ENCODE measurements at regions of chr14 and their contacts with region 1.

Region 1: DNA sequence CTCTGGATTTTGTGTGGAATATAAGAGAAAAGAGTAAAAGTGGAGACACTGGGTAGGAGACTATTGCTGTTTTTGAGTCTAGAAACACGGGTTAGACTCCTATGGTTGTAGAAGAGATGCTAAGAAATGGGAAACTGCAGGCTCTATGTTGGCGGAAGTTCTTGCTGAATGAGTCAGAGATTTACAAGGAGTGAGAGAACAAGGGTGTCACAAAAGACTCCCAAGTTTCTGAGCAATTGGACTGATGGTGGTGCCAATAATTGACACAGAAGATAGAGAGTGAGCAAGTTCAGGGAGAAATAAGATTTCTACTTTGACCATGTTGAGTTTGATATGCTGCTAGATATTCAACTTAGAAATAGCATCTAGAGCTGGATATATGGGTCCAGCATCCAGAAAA is 2.6 kb upstream of the PRKD1 start:
- DNase-seq: no peak
- H3K4me3 Mint-ChIP-seq: no peak overlapping the region
- H3K27ac Mint-ChIP-seq: peak overlapping the region; percentile 32
- H3K4me1 Mint-ChIP-seq: peaks cover 24% of the 10 kb centered on the region
- H3K27me3 Mint-ChIP-seq: no peaks in the 10 kb centered on the region
- CTCF ChIP-seq: no peak

Region 2: DNA sequence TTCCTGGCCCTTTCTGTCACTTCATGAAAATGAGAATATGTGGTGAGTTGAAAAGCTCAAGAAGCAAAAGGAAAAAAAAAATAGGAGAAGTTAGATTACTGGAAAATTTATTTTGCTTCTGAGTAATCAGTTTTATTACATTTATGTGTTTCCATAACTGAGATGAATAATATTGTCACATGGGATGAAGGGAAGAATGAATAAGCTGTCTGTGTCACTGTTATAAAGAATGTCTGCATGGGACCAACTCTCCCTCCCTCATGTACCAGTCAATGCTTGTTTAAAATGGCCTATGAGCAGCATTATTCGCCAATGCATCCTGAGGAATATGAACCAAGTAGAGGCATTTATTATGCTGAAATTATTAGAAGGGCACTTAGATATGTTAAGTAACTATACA is 249.0 kb before region 1 on chr14:
- CTCF ChIA-PET with region 1: no interaction called
- intact Hi-C with region 1: no loop called
- DNase-seq: no peak
- H3K4me3 Mint-ChIP-seq: no peak overlapping the region
- H3K27ac Mint-ChIP-seq: no peak overlapping the region
- H3K4me1 Mint-ChIP-seq: no peaks in the 10 kb centered on the region
- H3K27me3 Mint-ChIP-seq: no peaks in the 10 kb centered on the region
- CTCF ChIP-seq: no peak

Region 3: DNA sequence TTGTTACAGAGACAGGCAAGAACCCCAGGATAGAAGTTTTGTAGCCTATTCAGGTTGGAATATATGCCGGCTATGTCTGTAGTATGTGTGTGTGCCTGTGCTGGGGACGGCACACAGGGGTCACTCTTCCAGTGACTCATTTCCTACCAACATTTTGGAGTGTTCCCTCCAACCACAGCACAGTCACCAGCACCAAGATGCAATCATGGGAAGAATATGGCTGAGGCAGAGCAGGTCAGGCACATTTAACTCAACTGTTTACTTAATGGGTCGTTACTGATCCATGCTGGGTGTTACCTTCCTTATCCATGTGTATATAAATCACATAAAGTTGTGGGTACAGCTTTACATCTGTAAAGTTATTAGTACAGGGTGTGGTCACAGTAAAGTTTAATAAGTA is 181.0 kb before region 1 on chr14:
- CTCF ChIA-PET with region 1: no interaction called
- intact Hi-C with region 1: loop called (anchors 5 kb)
- DNase-seq: peak; percentile 34
- H3K4me3 Mint-ChIP-seq: peak overlapping the region; percentile 26
- H3K27ac Mint-ChIP-seq: peak overlapping the region; percentile 30
- H3K4me1 Mint-ChIP-seq: peaks cover 40% of the 10 kb centered on the region
- H3K27me3 Mint-ChIP-seq: no peaks in the 10 kb centered on the region
- CTCF ChIP-seq: no peak

Measured in Calu3 (cell line).